ENCODE measurements at regions of chr14 and their contacts with region 1.

Region 1: DNA sequence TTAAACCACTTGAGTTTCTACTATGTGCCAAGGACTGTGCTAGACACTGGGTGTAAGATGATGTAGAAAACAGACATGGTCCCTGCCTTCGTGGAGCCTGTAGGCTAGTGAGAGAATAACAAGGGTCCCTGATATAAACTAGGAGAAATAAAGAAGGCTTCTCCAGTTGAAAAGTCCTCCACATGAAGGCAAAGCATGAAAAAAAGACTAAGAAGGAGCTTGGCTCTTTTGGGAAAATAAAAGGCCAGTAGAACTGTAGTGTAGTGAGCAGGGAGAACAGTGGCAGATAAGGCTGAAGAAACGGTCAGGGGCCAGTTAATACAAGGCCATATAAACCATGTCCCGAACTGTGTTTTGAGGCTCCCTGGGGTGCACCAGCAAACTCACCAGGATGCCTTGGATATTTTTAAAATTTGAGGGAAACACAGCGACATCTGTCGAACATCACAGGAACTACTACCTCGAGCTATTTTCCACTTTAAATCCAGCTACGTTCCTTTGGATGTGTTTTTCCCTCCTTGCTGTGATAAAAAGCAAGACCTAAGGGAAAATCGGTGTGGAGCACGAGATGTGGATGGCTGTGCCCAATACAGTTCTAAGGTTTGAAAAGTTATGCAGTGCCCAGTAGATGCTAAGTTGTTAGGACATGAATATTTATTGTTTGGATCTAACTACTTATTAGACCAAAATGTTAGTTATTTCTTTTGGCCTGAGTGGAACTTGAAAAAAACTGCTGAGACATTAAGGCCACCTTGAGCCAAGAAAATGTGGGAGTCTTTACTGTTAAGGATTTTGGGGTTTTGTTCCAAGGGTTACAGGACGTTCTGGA is 8.5 kb upstream of the CFL2 start:
- DNase-seq: peak; percentile 56
- ATAC-seq: peak; percentile 77
- H3K4me3 Mint-ChIP-seq: no peak overlapping the region
- H3K27ac Mint-ChIP-seq: no peak overlapping the region
- H3K4me1 Mint-ChIP-seq: no peaks in the 10 kb centered on the region
- H3K27me3 Mint-ChIP-seq: peaks cover 2% of the 10 kb centered on the region
- CTCF ChIP-seq: peak; percentile 81

Region 2: GRCh38 chr14:34662561-34663088 is 60.3 kb before region 1 on chr14:
- CTCF ChIA-PET with region 1: interaction called, 10 read pairs
- POLR2A ChIA-PET with region 1: interaction called, 3 read pairs
- intact Hi-C with region 1: no loop called
- DNase-seq: no peak
- ATAC-seq: no peak
- H3K4me3 Mint-ChIP-seq: no peak overlapping the region
- H3K27ac Mint-ChIP-seq: no peak overlapping the region
- H3K4me1 Mint-ChIP-seq: peaks cover 7% of the 10 kb centered on the region
- H3K27me3 Mint-ChIP-seq: no peaks in the 10 kb centered on the region
- CTCF ChIP-seq: no peak

Region 3: GRCh38 chr14:34678306-34678705 is 44.6 kb before region 1 on chr14:
- CTCF ChIA-PET with region 1: interaction called, 105 read pairs
- POLR2A ChIA-PET with region 1: no interaction called
- intact Hi-C with region 1: no loop called
- DNase-seq: no peak
- ATAC-seq: no peak
- H3K4me3 Mint-ChIP-seq: no peak overlapping the region
- H3K27ac Mint-ChIP-seq: no peak overlapping the region
- H3K4me1 Mint-ChIP-seq: peaks cover 6% of the 10 kb centered on the region
- H3K27me3 Mint-ChIP-seq: no peaks in the 10 kb centered on the region
- CTCF ChIP-seq: no peak

Region 4: GRCh38 chr14:34699873-34700621 is 22.9 kb before region 1 on chr14:
- CTCF ChIA-PET with region 1: interaction called, 17 read pairs
- POLR2A ChIA-PET with region 1: interaction called, 3 read pairs
- intact Hi-C with region 1: no loop called
- DNase-seq: no peak
- ATAC-seq: no peak
- H3K4me3 Mint-ChIP-seq: no peak overlapping the region
- H3K27ac Mint-ChIP-seq: no peak overlapping the region
- H3K4me1 Mint-ChIP-seq: no peaks in the 10 kb centered on the region
- H3K27me3 Mint-ChIP-seq: no peaks in the 10 kb centered on the region
- CTCF ChIP-seq: no peak

Region 5: DNA sequence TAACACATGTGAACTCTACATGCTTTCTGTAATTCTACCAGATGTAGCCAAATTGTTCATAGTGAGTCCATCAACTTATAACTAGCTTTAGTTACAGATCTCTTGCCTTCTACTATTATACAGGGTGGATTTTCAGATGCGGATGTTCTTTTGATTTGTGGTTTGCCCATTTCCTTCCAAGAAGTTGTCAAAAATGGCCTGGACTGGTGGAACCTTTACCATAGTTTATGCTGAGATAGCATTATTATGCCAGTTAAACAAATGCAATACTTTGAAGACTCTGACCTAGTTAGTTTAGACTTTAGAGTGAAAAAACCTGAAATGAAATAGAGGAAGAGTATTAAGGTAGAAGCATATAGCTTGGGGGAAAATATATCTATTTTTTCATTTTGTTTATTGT is 18.9 kb after region 1 on chr14:
- CTCF ChIA-PET with region 1: interaction called, 18 read pairs
- POLR2A ChIA-PET with region 1: no interaction called
- intact Hi-C with region 1: no loop called
- DNase-seq: no peak
- ATAC-seq: peak; percentile 42
- H3K4me3 Mint-ChIP-seq: no peak overlapping the region
- H3K27ac Mint-ChIP-seq: no peak overlapping the region
- H3K4me1 Mint-ChIP-seq: peaks cover 12% of the 10 kb centered on the region
- H3K27me3 Mint-ChIP-seq: no peaks in the 10 kb centered on the region
- CTCF ChIP-seq: no peak

Region 6: DNA sequence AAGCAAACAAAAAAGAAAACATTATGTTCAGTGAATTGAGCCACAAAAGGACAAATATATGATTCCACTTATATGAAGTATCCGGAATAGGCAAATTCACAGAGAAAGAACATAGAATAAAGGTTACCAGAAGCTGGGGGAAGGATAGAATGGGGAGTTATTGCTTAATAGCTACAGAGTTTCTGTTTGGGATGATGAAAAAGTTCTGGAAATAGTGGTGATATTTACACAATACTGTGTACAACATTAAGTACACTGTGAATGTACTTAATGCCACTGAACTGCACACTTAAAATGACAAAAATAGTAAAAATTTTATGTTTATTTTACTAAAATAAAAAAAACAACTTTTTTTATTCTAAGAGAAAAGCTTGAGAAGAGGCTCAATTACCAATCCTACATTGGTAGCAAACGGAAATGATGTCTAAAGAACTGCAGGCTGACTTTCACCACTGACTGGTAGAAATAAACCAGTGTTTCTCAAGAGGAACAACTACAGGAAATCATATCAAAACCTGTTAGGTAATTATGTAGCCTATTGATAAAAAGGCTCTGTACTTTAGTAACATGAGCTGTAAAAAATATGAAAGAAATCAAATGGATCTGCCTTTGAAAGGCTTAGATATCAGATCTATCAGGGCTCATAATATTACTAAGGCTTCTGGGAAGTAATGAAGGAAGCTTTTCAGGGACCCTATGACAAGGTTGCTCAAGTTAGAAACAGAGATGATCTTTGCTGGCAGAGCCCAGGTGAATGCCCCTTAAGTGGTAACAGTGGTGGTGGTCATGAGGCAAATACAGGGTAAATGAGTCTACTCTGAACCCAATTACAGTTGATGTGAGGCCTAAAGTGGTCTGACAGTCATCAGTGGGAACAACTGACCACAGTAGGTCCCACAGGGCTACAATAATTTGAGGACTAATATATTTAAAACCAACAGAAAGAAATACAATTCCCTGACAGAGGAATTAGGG is 110.9 kb after region 1 on chr14:
- CTCF ChIA-PET with region 1: no interaction called
- POLR2A ChIA-PET with region 1: no interaction called
- intact Hi-C with region 1: no loop called
- DNase-seq: no peak
- ATAC-seq: no peak
- H3K4me3 Mint-ChIP-seq: no peak overlapping the region
- H3K27ac Mint-ChIP-seq: peak overlapping the region; percentile 53
- H3K4me1 Mint-ChIP-seq: peaks cover 48% of the 10 kb centered on the region
- H3K27me3 Mint-ChIP-seq: no peaks in the 10 kb centered on the region
- CTCF ChIP-seq: no peak

Region 7: GRCh38 chr14:34906287-34906686 is 183.4 kb after region 1 on chr14:
- CTCF ChIA-PET with region 1: no interaction called
- POLR2A ChIA-PET with region 1: no interaction called
- intact Hi-C with region 1: no loop called
- DNase-seq: no peak
- ATAC-seq: no peak
- H3K4me3 Mint-ChIP-seq: no peak overlapping the region
- H3K27ac Mint-ChIP-seq: no peak overlapping the region
- H3K4me1 Mint-ChIP-seq: no peaks in the 10 kb centered on the region
- H3K27me3 Mint-ChIP-seq: no peaks in the 10 kb centered on the region
- CTCF ChIP-seq: no peak

Measured in activated CD8-positive, alpha-beta T cell treated with anti-CD3 and anti-CD28 coated beads for 36 hours (primary cell).